Activated CD8-positive, alpha-beta T cell treated with anti-CD3 and anti-CD28 coated beads for 36 hours (primary cell): ENCODE measurements at regions of chr17 and their contacts with region 1.

Region 1: GRCh38 chr17:29219378-29220047 is 27.1 kb upstream of the CRYBA1 start:
- DNase-seq: peak; percentile 86
- ATAC-seq: peak; percentile 97
- H3K4me3 Mint-ChIP-seq: no peak overlapping the region
- H3K27ac Mint-ChIP-seq: no peak overlapping the region
- H3K4me1 Mint-ChIP-seq: peaks cover 4% of the 10 kb centered on the region
- H3K27me3 Mint-ChIP-seq: no peaks in the 10 kb centered on the region
- CTCF ChIP-seq: peak; percentile 98

Region 2: GRCh38 chr17:29019475-29020181 is 199.9 kb before region 1 on chr17:
- CTCF ChIA-PET with region 1: no interaction called
- POLR2A ChIA-PET with region 1: no interaction called
- intact Hi-C with region 1: no loop called
- DNase-seq: peak; percentile 7
- ATAC-seq: peak; percentile 45
- H3K4me3 Mint-ChIP-seq: no peak overlapping the region
- H3K27ac Mint-ChIP-seq: no peak overlapping the region
- H3K4me1 Mint-ChIP-seq: peaks cover 6% of the 10 kb centered on the region
- H3K27me3 Mint-ChIP-seq: peaks cover 41% of the 10 kb centered on the region
- CTCF ChIP-seq: no peak

Region 3: GRCh38 chr17:29059281-29059680 is 160.2 kb before region 1 on chr17:
- CTCF ChIA-PET with region 1: no interaction called
- POLR2A ChIA-PET with region 1: no interaction called
- intact Hi-C with region 1: no loop called
- DNase-seq: no peak
- ATAC-seq: no peak
- H3K4me3 Mint-ChIP-seq: no peak overlapping the region
- H3K27ac Mint-ChIP-seq: no peak overlapping the region
- H3K4me1 Mint-ChIP-seq: peaks cover 13% of the 10 kb centered on the region
- H3K27me3 Mint-ChIP-seq: no peaks in the 10 kb centered on the region
- CTCF ChIP-seq: no peak

Region 4: DNA sequence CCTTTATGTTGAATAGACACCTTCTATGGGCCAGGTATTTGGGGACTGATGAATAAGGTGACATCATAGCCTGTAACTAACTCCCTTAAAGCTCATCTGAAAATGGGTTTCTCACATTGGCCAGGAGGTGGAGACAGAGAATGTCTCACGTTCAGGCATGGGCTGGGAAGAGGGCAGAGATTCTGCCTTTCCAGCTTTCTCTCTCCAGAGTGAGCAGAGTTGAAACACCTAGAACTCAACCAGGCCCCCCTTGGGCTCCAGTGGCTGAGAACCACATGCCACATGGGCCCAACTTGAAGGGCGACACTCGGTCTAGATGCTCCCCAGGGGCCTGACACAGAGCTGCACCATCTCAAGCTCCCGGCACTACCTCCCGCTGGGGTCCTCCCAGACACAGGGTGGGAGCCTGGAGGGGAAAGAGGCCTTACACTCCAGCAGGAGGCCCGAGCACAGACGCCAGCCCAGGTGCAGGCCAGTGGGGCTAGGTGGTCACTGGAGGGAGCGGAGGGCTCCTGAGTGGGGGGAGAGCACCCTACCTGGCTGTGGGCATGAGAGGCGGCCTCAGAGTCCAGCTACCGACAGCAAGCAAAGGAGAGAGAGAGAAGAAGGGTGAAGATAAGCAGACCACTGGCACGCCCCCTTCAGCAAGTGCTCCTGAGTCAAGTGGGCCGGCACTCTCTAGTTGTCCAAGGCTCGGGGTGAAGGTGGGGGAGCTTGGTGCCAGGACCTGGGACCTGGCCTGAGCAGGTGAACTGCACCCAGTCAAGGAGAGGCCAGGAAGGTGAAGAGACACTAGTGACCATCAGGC is 95.2 kb before region 1 on chr17:
- CTCF ChIA-PET with region 1: interaction called, 33 read pairs
- POLR2A ChIA-PET with region 1: no interaction called
- intact Hi-C with region 1: no loop called
- DNase-seq: peak; percentile 55
- ATAC-seq: peak; percentile 97
- H3K4me3 Mint-ChIP-seq: no peak overlapping the region
- H3K27ac Mint-ChIP-seq: no peak overlapping the region
- H3K4me1 Mint-ChIP-seq: no peaks in the 10 kb centered on the region
- H3K27me3 Mint-ChIP-seq: no peaks in the 10 kb centered on the region
- CTCF ChIP-seq: peak; percentile 76

Region 5: DNA sequence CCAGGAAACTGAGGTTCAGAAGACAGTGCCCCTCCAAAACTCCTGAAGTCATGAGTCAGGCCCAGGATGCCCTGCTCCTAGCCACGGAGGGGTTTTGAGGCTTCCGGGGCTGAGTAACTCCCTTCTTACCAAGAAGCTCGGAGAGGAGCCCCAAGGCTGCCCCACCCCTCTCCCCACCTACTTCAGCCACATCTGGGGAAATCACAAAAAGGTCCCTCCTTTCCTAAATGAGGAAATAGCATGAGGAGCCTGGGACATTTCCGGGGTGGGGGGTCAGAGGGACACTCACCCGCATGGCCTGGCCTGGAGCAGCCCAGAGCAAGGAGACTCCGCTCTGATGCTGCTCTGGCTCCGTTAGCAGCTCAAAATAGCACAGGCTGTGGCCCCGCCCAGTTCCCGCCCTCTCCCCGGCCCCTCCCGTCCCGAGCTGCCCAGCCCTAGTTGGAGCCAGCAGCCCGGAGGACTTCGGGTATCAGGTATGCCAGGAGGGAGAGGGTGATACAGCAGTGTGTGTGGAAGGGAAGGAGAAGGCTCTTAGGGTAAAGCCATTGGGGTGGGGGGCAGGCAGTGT is 79.4 kb before region 1 on chr17:
- CTCF ChIA-PET with region 1: interaction called, 279 read pairs
- POLR2A ChIA-PET with region 1: no interaction called
- intact Hi-C with region 1: no loop called
- DNase-seq: peak; percentile 96
- ATAC-seq: peak; percentile 74
- H3K4me3 Mint-ChIP-seq: peak overlapping the region; percentile 92
- H3K27ac Mint-ChIP-seq: peak overlapping the region; percentile 99
- H3K4me1 Mint-ChIP-seq: peaks cover 62% of the 10 kb centered on the region
- H3K27me3 Mint-ChIP-seq: no peaks in the 10 kb centered on the region
- CTCF ChIP-seq: no peak

Region 6: GRCh38 chr17:29180034-29180787 is 39.3 kb before region 1 on chr17 and contains the start of gene MYO18A:
- CTCF ChIA-PET with region 1: interaction called, 19 read pairs
- POLR2A ChIA-PET with region 1: interaction called, 4 read pairs
- intact Hi-C with region 1: no loop called
- DNase-seq: peak; percentile 83
- ATAC-seq: peak; percentile 95
- H3K4me3 Mint-ChIP-seq: peak within 1 kb of the TSS; percentile 58
- H3K27ac Mint-ChIP-seq: no peak within 1 kb of the TSS
- H3K4me1 Mint-ChIP-seq: peaks cover 31% of the 10 kb centered on the region
- H3K27me3 Mint-ChIP-seq: no peaks in the 10 kb centered on the region
- CTCF ChIP-seq: peak; percentile 86
- total RNA-seq, gene MYO18A: 27.5 to 29.4 TPM

Region 7: GRCh38 chr17:29195465-29196081 is 23.9 kb before region 1 on chr17:
- CTCF ChIA-PET with region 1: interaction called, 18 read pairs
- POLR2A ChIA-PET with region 1: no interaction called
- intact Hi-C with region 1: no loop called
- DNase-seq: peak; percentile 20
- ATAC-seq: peak; percentile 64
- H3K4me3 Mint-ChIP-seq: no peak overlapping the region
- H3K27ac Mint-ChIP-seq: no peak overlapping the region
- H3K4me1 Mint-ChIP-seq: peaks cover 7% of the 10 kb centered on the region
- H3K27me3 Mint-ChIP-seq: peaks cover 6% of the 10 kb centered on the region
- CTCF ChIP-seq: no peak

Region 8: GRCh38 chr17:29241015-29241963 is 21.8 kb after region 1 on chr17:
- CTCF ChIA-PET with region 1: interaction called, 15 read pairs
- POLR2A ChIA-PET with region 1: interaction called, 3 read pairs
- intact Hi-C with region 1: no loop called
- DNase-seq: peak; percentile 30
- ATAC-seq: peak; percentile 91
- H3K4me3 Mint-ChIP-seq: no peak overlapping the region
- H3K27ac Mint-ChIP-seq: no peak overlapping the region
- H3K4me1 Mint-ChIP-seq: peaks cover 7% of the 10 kb centered on the region
- H3K27me3 Mint-ChIP-seq: no peaks in the 10 kb centered on the region
- CTCF ChIP-seq: no peak

Region 9: GRCh38 chr17:29293890-29294579 is 74.5 kb after region 1 on chr17 and contains the start of gene NUFIP2:
- CTCF ChIA-PET with region 1: interaction called, 16 read pairs
- POLR2A ChIA-PET with region 1: no interaction called
- intact Hi-C with region 1: no loop called
- DNase-seq: peak; percentile 99
- ATAC-seq: peak; percentile 91
- H3K4me3 Mint-ChIP-seq: peak within 1 kb of the TSS; percentile 100
- H3K27ac Mint-ChIP-seq: peak within 1 kb of the TSS; percentile 100
- H3K4me1 Mint-ChIP-seq: peaks cover 28% of the 10 kb centered on the region
- H3K27me3 Mint-ChIP-seq: no peaks in the 10 kb centered on the region
- CTCF ChIP-seq: no peak
- total RNA-seq, gene NUFIP2: 49.5 to 56.4 TPM

Region 10: DNA sequence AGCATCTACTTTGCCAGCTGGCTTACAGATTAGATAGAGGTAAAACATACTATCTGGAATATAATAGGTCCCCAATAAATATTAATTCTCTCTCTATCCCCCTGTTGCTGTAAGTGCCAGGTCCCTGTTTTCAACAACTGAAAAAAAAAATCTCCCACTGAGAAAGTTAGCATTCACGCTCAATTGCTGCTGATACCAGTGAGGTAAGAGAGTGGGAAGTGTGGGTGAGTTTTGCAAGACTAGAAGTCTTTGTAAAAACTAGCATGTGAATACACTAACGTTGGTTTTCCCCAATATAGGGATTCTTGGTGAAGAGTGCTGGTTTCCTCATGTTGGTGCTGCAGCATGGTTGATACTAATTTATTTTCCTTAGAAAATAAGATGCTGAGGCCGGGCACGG is 159.0 kb after region 1 on chr17:
- CTCF ChIA-PET with region 1: no interaction called
- POLR2A ChIA-PET with region 1: no interaction called
- intact Hi-C with region 1: no loop called
- DNase-seq: no peak
- ATAC-seq: no peak
- H3K4me3 Mint-ChIP-seq: no peak overlapping the region
- H3K27ac Mint-ChIP-seq: no peak overlapping the region
- H3K4me1 Mint-ChIP-seq: no peaks in the 10 kb centered on the region
- H3K27me3 Mint-ChIP-seq: no peaks in the 10 kb centered on the region
- CTCF ChIP-seq: no peak